CD14-positive monocyte (primary cell): ENCODE measurements at regions of chr19 and their contacts with region 1.

Region 1: DNA sequence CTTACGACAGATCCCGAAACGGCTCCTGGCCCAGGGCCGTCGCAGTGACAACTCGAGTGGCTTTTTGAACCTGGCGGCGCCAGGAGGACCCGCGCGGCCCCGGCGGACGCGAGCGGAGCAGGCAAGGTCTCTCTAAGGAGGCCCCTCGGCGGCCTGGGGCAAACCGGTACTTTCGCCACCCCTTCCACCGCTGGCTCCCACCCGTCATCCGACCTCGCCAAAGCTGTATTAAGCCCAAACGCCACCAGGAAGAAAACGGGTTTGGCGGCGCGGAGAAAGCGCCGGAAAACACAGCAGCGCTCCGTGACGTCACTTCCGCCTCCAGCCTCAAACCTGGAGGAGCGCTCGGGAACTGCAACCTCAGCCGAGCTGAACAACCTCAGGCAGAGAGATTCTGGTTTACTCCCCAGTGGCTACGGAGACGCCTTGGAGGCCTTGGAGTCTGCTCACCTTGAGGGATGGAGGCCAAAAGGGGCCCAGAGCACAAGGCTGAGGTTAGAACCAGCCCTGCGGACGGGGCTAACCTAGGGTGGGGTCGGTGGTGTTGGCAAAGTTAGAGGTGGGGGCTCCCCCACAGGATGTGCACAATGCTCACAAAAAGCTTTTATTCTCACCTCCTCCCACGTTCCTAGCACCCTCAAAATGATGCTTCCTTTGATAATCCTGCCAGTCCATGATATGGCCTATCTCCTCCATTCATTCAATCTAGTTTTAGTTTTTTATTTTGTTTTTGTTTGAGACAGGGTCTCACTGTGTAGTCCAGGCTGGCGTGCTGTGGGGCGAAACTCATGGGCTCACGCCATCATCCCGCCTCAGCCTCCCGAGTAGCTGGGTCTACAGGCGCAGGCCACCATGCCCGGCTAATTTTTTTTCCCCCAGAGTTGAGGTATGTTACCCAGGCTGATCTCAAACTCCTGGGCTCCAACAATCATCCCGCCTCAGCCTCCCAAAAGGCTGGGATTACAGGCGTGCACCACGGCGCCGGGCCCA is at the start of gene ZNF266:
- DNase-seq: peak; percentile 89 to 91 (median 89)
- H3K4me3 ChIP-seq: peak within 1 kb of the TSS; percentile 47 to 93 (median 60)
- H3K4me3 Mint-ChIP-seq: peak within 1 kb of the TSS; percentile 92 to 97
- H3K27ac ChIP-seq: peak within 1 kb of the TSS; percentile 68 to 95
- H3K27ac Mint-ChIP-seq: peak within 1 kb of the TSS; percentile 89 to 95 (median 94)
- H3K4me1 ChIP-seq: peaks cover 15 to 20% of the 10 kb centered on the region in 2 donors
- H3K4me1 Mint-ChIP-seq: peaks cover 17% of the 10 kb centered on the region
- H3K27me3 ChIP-seq: no peaks in the 10 kb centered on the region
- H3K27me3 Mint-ChIP-seq: peaks cover 0 to 2% (median 1%) of the 10 kb centered on the region in 3 donors
- CTCF ChIP-seq: peak; percentile 56
- polyA plus RNA-seq, gene ZNF266: 5.1 to 33.3 (median 8.5) TPM

Region 2: DNA sequence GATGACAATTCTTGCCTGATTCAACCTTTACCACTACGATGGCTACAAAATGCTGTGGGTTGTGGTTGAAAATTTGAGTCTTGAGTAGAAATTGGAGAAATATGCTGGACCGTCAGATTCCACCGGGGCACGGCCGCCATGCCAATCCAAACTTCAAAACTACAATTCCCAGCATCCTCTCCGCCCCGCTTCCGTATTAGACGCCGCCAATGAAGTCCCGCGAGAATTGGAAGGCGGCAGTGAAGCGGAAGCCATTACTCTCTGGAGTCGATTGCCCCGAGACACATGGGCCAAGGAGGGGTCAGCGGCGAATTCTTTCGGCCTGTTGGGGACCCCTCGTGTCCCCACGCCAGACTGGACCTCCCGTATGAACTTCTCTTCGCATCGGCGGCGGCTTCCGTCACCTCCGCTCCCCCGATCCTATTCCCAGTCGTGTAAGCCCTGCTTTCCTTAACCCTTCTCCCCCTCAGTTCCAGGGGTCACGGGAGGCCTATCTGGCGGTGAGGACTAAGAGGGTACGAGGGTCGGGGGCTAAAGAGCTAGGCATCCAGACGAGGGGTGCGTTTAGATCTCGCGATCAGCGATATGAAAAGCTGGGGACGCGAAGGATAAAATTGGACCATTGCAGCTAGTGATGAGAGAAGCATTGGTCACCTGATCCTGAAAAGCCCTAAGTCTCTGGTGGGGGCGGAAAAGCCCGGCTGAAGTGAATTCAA is 295.3 kb before region 1 on chr19 and contains the start of gene ZNF317:
- intact Hi-C with region 1: loop called in 1 of 2 experiments (anchors 10 kb)
- DNase-seq: peak; percentile 87 to 97 (median 91)
- H3K4me3 ChIP-seq: peak within 1 kb of the TSS; percentile 75 to 100 (median 98)
- H3K4me3 Mint-ChIP-seq: peak within 1 kb of the TSS; percentile 99
- H3K27ac ChIP-seq: peak within 1 kb of the TSS; percentile 77 to 97
- H3K27ac Mint-ChIP-seq: peak within 1 kb of the TSS; percentile 91 to 99 (median 98)
- H3K4me1 ChIP-seq: peaks cover 28 to 32% of the 10 kb centered on the region in 2 donors
- H3K4me1 Mint-ChIP-seq: peaks cover 40% of the 10 kb centered on the region
- H3K27me3 ChIP-seq: no peaks in the 10 kb centered on the region
- H3K27me3 Mint-ChIP-seq: peaks cover 0 to 5% (median 0%) of the 10 kb centered on the region in 3 donors
- CTCF ChIP-seq: no peak
- polyA plus RNA-seq, gene ZNF317: 17.3 to 25.5 (median 20.7) TPM

Region 3: GRCh38 chr19:9219489-9219888 is 216.1 kb before region 1 on chr19 and contains the start of gene OR7D4:
- intact Hi-C with region 1: no loop called
- DNase-seq: no peak
- H3K4me3 ChIP-seq: no peak within 1 kb of the TSS
- H3K4me3 Mint-ChIP-seq: no peak within 1 kb of the TSS
- H3K27ac ChIP-seq: no peak within 1 kb of the TSS
- H3K27ac Mint-ChIP-seq: no peak within 1 kb of the TSS
- H3K4me1 ChIP-seq: no peaks in the 10 kb centered on the region
- H3K4me1 Mint-ChIP-seq: no peaks in the 10 kb centered on the region
- H3K27me3 ChIP-seq: no peaks in the 10 kb centered on the region
- H3K27me3 Mint-ChIP-seq: peaks cover 2 to 5% (median 3%) of the 10 kb centered on the region in 3 donors
- CTCF ChIP-seq: no peak
- polyA plus RNA-seq, gene OR7D4: not detected

Region 4: GRCh38 chr19:9323919-9324583 is 111.5 kb before region 1 on chr19 and contains the start of gene ZNF559:
- intact Hi-C with region 1: loop called (anchors 5 kb)
- DNase-seq: peak; percentile 93 to 95 (median 93)
- H3K4me3 ChIP-seq: peak within 1 kb of the TSS; percentile 73 to 90 (median 89)
- H3K4me3 Mint-ChIP-seq: peak within 1 kb of the TSS; percentile 92 to 98
- H3K27ac ChIP-seq: peak within 1 kb of the TSS; percentile 82 to 89
- H3K27ac Mint-ChIP-seq: peak within 1 kb of the TSS; percentile 89 to 96 (median 94)
- H3K4me1 ChIP-seq: peaks cover 14 to 20% of the 10 kb centered on the region in 2 donors
- H3K4me1 Mint-ChIP-seq: peaks cover 10% of the 10 kb centered on the region
- H3K27me3 ChIP-seq: no peaks in the 10 kb centered on the region
- H3K27me3 Mint-ChIP-seq: peaks cover 0 to 3% (median 2%) of the 10 kb centered on the region in 3 donors
- CTCF ChIP-seq: peak; percentile 37
- polyA plus RNA-seq, gene ZNF559: 9.0 to 16.0 (median 9.1) TPM

Region 5: GRCh38 chr19:9329999-9330398 is 105.6 kb before region 1 on chr19:
- intact Hi-C with region 1: loop called in 1 of 2 experiments (anchors 5 kb)
- DNase-seq: no peak
- H3K4me3 ChIP-seq: no peak overlapping the region
- H3K4me3 Mint-ChIP-seq: no peak overlapping the region
- H3K27ac ChIP-seq: no peak overlapping the region
- H3K27ac Mint-ChIP-seq: no peak overlapping the region
- H3K4me1 ChIP-seq: peaks cover 0 to under 1% of the 10 kb centered on the region in 2 donors
- H3K4me1 Mint-ChIP-seq: no peaks in the 10 kb centered on the region
- H3K27me3 ChIP-seq: no peaks in the 10 kb centered on the region
- H3K27me3 Mint-ChIP-seq: peaks cover 0 to 2% (median 0%) of the 10 kb centered on the region in 3 donors
- CTCF ChIP-seq: no peak

Region 6: DNA sequence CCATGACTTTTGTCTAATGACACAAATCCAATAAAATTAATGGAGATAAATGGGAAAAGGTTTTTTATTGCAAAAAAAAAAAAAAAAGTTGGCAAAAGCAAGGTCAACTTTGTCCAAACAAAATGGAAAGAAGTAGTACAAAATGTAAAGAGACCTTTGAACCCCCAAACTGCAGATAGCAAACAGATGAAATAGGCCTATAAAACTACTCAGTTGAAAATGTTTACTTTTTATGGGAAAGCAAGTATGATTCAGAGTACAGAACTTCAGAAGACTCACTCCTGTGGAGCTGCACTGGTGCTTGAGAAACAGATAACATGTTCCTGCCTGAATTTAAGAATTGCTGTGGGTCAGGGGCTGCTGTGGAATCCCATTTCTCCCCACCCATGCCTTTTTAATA is 82.6 kb before region 1 on chr19:
- intact Hi-C with region 1: no loop called
- DNase-seq: no peak
- H3K4me3 ChIP-seq: no peak overlapping the region
- H3K4me3 Mint-ChIP-seq: no peak overlapping the region
- H3K27ac ChIP-seq: no peak overlapping the region
- H3K27ac Mint-ChIP-seq: no peak overlapping the region
- H3K4me1 ChIP-seq: no peaks in the 10 kb centered on the region
- H3K4me1 Mint-ChIP-seq: no peaks in the 10 kb centered on the region
- H3K27me3 ChIP-seq: no peaks in the 10 kb centered on the region
- H3K27me3 Mint-ChIP-seq: peaks cover 0 to 3% (median 1%) of the 10 kb centered on the region in 3 donors
- CTCF ChIP-seq: no peak

Region 7: GRCh38 chr19:9547870-9548269 is 112.3 kb after region 1 on chr19:
- intact Hi-C with region 1: loop called in 1 of 2 experiments (anchors 10 kb)
- DNase-seq: no peak
- H3K4me3 ChIP-seq: no peak overlapping the region
- H3K4me3 Mint-ChIP-seq: no peak overlapping the region
- H3K27ac ChIP-seq: no peak overlapping the region
- H3K27ac Mint-ChIP-seq: no peak overlapping the region
- H3K4me1 ChIP-seq: no peaks in the 10 kb centered on the region
- H3K4me1 Mint-ChIP-seq: no peaks in the 10 kb centered on the region
- H3K27me3 ChIP-seq: no peaks in the 10 kb centered on the region
- H3K27me3 Mint-ChIP-seq: peaks cover 0 to 1% (median 0%) of the 10 kb centered on the region in 3 donors
- CTCF ChIP-seq: no peak

Region 8: GRCh38 chr19:9584073-9584833 is 148.7 kb after region 1 on chr19 and contains the start of gene ZNF121:
- intact Hi-C with region 1: loop called in 1 of 2 experiments (anchors 5 kb)
- DNase-seq: peak; percentile 78 to 80 (median 79)
- H3K4me3 ChIP-seq: peak within 1 kb of the TSS; percentile 68 to 95 (median 81)
- H3K4me3 Mint-ChIP-seq: peak within 1 kb of the TSS; percentile 93 to 96
- H3K27ac ChIP-seq: peak within 1 kb of the TSS; percentile 84 to 91
- H3K27ac Mint-ChIP-seq: peak within 1 kb of the TSS; percentile 92 to 98 (median 95)
- H3K4me1 ChIP-seq: peaks cover 10 to 17% of the 10 kb centered on the region in 2 donors
- H3K4me1 Mint-ChIP-seq: peaks cover 16% of the 10 kb centered on the region
- H3K27me3 ChIP-seq: no peaks in the 10 kb centered on the region
- H3K27me3 Mint-ChIP-seq: peaks cover 4 to 11% (median 7%) of the 10 kb centered on the region in 3 donors
- CTCF ChIP-seq: no peak
- polyA plus RNA-seq, gene ZNF121: 1.5 to 7.2 (median 3.8) TPM